ENCODE measurements at regions of chr5 and their contacts with region 1.

Region 1: GRCh38 chr5:68287976-68288706 is 72.6 kb downstream of the PIK3R1 start:
- DNase-seq: peak; percentile 32 to 34
- ATAC-seq: peak; percentile 86
- H3K4me3 ChIP-seq: peak overlapping the region; percentile 62
- H3K27ac ChIP-seq: peak overlapping the region; percentile 79 to 86
- H3K4me1 ChIP-seq: peaks cover 56% of the 10 kb centered on the region
- CTCF ChIP-seq: no peak
- EP300 ChIP-seq: no peak
- POLR2A ChIP-seq: peak; percentile 25; the same call in 1 of the 2 replicates
- RAD21 ChIP-seq: no peak; a peak in 1 of 5 replicates

Region 2: GRCh38 chr5:68299105-68299504 is 11.0 kb after region 1 on chr5:
- CTCF ChIA-PET with region 1: interaction called, 23 read pairs
- POLR2A ChIA-PET with region 1: no interaction called
- DNase-seq: no peak
- ATAC-seq: no peak
- H3K4me3 ChIP-seq: no peak overlapping the region
- H3K27ac ChIP-seq: no peak overlapping the region
- H3K4me1 ChIP-seq: no peaks in the 10 kb centered on the region
- CTCF ChIP-seq: no peak
- EP300 ChIP-seq: no peak
- POLR2A ChIP-seq: no peak
- RAD21 ChIP-seq: no peak

Region 3: DNA sequence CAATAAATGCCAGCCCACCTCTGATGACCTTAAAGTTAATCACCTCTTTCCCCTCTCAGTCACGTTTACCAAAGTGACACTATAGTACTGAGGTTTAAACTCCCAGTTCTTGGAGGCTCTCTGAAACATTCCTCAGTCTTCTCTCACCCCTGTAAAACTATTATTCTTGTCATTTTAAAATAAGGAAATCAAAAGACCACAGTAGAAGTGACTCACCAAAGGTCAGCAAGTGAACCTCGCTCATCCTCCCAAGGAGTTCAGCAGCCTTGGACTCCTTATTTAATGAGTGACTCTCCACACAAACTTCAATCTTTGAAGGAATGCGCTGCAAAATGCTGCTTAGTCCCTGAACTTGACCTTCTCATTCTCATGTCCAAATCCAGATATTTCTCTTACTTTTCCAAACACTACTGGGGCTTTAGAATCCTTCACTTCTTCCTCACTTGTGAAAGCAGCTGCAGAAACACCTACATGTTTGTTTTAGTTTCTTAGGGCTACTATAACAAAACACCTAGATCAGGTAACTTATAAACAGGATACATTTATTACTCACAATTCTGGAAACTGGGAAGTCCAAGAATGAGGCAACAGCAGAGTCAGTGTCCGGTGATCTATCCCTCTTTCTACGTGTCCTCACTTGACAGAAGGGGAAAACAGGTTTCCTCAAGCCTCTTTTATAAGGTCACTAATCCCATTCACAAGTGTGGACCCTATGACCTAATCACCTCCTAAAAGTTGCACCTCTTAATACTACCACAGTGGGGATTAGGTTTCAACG is 31.4 kb after region 1 on chr5:
- CTCF ChIA-PET with region 1: interaction called, 26 read pairs
- POLR2A ChIA-PET with region 1: no interaction called
- DNase-seq: peak; percentile 13 to 74
- ATAC-seq: peak; percentile 73 to 78
- H3K4me3 ChIP-seq: peak overlapping the region; percentile 18; the same call in 2 of the 3 replicates
- H3K27ac ChIP-seq: peak overlapping the region; percentile 80 to 82
- H3K4me1 ChIP-seq: peaks cover 32% of the 10 kb centered on the region
- CTCF ChIP-seq: no peak
- EP300 ChIP-seq: peak in 1 of 2 experiments; percentile 60; a peak in 1 of 5 replicates
- POLR2A ChIP-seq: no peak
- RAD21 ChIP-seq: no peak; a peak in 1 of 5 replicates

Region 4: DNA sequence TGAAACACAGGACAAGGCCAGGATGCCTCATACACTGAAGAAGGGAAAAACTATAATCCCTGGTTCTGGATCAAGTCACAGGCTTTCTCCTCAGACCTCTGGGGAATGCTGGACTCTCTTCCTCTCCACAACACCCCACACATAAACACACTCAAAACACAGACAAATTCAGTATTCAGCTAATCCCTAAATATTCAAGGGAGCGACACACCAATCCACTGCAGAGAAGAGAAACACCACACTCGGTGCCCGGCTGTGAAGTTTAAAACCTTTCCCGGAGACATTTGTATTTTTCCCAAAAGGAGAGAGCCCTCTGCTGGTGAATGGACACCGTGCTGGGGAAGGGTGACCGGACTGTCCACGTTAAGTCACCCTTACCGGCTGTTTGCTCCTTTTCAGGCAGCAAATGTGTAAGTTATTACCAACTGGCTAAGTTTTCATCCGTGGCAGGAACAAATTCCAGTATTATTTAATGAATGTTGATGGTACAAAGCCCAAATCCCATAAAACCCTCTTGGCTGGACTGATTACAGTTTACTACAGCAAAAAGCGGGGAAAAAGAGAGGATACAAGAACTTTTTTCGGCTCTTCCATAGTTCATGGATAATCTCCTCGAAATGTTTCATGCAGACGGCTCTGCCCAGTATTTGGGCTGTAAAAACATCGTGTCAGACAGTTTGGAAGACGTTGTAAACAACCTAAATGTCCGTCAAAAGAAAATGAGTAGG is 674.8 kb after region 1 on chr5:
- CTCF ChIA-PET with region 1: interaction called, 30 read pairs
- POLR2A ChIA-PET with region 1: no interaction called
- DNase-seq: peak; percentile 64 to 70
- ATAC-seq: peak; percentile 87 to 97
- H3K4me3 ChIP-seq: no peak overlapping the region
- H3K27ac ChIP-seq: peak overlapping the region in 1 of 2 experiments; percentile 67; a peak in 3 of 6 replicates
- H3K4me1 ChIP-seq: no peaks in the 10 kb centered on the region
- CTCF ChIP-seq: peak; percentile 93
- EP300 ChIP-seq: no peak
- POLR2A ChIP-seq: no peak
- RAD21 ChIP-seq: peak; percentile 84 to 90

Measured in A549 (cell line).